Activated B cell treated with CpG ODN at 0.5 μM for 24 hours (primary cell): ENCODE measurements at regions of chr3 and their contacts with region 1.

Region 1: DNA sequence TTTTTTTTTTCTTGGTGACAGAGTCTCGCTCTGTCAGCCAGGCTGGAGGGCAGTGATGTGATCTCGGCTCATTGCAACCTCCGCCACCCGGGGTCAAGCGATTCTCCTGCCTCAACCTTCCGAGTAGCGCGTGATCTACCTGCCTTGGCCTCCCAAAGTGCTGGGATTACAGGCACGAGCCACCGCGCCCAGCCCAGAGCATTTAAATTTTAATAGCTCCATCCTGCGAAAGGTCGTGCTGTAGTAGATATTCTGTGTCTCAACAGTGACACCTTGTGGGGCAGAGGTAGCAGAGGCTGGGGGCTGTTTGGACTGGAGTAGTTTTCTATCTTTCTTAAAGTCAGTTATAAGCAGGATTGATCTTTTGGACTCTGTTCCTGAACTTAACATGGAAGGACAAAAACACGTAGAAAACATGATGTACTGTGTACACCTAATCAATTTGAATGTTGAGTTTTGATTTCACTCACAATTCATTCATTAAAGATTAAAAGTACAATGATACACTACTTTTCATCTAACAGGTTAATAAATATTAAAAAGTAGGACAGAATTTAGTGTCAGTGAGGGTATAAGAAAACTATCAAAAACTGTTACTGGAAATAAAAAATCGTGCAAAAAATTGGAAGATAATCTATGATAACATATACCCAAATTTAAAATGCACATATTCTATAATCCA is 11.0 kb upstream of the PDCD6IP start:
- DNase-seq: peak; percentile 17
- ATAC-seq: peak; percentile 95
- H3K4me3 Mint-ChIP-seq: peak overlapping the region; percentile 26
- H3K27ac Mint-ChIP-seq: no peak overlapping the region
- H3K4me1 Mint-ChIP-seq: peaks cover 13% of the 10 kb centered on the region
- H3K27me3 Mint-ChIP-seq: no peaks in the 10 kb centered on the region
- CTCF ChIP-seq: no peak

Region 2: DNA sequence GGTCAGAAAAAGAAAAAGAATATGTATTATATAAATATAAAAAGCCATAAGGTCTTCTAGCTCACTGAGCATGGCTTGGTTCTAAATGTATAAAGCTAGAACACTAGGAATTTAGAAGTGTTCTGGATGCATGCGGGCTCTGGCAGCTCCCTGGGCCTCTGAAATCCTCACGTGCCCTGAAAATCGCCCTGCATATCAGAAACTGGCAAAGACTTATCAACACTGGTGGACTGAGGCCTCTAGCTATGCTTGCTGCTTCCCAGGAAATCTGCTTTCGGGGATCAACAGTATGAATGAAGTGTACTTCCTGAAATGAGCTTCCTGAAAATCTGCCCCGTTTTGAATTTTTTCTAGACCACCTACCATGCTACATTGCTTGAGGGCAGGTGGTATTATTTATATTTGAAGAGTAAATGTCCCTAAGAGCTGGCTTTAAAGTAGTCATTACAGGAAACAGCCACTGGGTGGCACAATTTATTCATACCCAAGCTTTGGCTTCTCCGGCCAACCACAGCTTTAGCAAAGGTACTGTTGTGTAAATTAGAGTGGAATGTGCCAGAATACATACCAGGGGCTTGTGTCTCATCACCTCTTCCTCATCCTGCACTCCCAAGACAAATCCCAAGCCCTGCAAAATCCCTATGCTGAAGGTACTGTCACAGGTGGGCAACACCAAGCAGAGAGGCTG is 656.0 kb before region 1 on chr3:
- CTCF ChIA-PET with region 1: interaction called, 47 read pairs
- POLR2A ChIA-PET with region 1: interaction called, 3 read pairs
- intact Hi-C with region 1: loop called (anchors 1 kb)
- DNase-seq: no peak
- ATAC-seq: peak; percentile 82
- H3K4me3 Mint-ChIP-seq: no peak overlapping the region
- H3K27ac Mint-ChIP-seq: no peak overlapping the region
- H3K4me1 Mint-ChIP-seq: peaks cover 3% of the 10 kb centered on the region
- H3K27me3 Mint-ChIP-seq: no peaks in the 10 kb centered on the region
- CTCF ChIP-seq: peak; percentile 34

Region 3: DNA sequence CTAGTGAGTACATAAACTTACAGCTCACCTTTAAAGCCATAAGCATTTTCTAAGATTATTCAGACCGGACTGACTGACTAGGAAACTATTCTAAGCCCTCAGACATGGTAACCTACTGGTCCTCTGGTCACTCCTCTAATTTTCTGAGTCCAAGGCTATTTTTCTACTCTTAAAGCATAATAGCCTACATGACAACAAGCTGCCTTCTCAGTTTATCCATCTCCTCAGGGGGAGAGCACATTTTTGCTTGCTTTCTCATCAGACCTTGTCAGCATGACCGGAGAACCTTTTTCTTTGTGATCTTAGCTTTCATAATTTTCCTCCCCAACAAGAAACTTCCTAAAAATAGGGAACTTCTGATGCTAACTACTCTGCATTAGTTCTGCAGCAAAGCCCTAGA is 385.7 kb before region 1 on chr3:
- CTCF ChIA-PET with region 1: no interaction called
- POLR2A ChIA-PET with region 1: no interaction called
- intact Hi-C with region 1: loop called (anchors 10 kb)
- DNase-seq: no peak
- ATAC-seq: no peak
- H3K4me3 Mint-ChIP-seq: no peak overlapping the region
- H3K27ac Mint-ChIP-seq: no peak overlapping the region
- H3K4me1 Mint-ChIP-seq: no peaks in the 10 kb centered on the region
- H3K27me3 Mint-ChIP-seq: no peaks in the 10 kb centered on the region
- CTCF ChIP-seq: no peak

Region 4: DNA sequence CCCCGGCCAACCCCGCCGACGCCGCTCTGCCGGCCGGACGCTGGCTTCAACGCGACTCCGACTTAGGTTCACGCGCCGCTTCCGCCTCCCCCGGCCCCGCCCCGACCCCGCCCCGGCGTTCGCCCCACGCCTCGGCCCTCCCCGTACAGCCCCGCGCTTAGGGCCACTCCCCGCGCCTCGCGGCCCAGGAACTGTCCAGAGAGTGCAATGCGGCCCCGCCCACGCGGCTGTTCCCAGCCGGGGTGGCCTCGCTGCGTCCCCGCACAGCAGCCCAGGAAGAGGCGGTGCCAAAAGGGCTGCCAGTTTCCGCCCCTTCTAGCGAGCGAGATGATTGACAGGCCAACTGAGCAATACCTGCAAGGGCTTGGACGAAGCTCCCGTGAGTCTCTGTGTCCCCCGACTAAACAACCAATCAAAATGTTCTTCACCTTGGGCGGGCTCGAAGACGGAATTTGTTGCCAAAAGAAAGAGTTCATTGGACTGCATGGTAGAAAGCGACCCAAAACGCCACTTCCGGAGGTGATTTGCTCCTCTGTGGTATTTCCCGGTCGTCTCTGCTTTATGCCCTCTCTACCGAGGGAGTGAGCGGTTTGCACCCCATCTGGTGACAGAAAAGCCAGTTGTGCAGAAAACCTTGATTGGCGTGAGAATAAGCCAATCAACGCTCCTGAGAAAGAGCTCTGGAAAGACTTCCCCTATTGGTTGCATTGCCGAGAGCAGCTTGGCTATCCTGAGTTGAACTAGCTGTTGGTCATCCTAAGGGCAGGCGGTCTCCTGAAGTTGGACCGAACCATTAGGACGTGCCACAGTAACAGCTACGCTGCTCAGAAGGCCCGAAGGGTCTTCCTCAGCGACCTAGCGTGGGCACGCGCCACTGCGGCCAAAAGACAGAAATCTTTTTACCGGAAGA is 346.9 kb before region 1 on chr3 and contains the start of gene UBP1:
- CTCF ChIA-PET with region 1: no interaction called
- POLR2A ChIA-PET with region 1: no interaction called
- intact Hi-C with region 1: no loop called
- DNase-seq: peak; percentile 95
- ATAC-seq: peak; percentile 84
- H3K4me3 Mint-ChIP-seq: peak within 1 kb of the TSS; percentile 100
- H3K27ac Mint-ChIP-seq: peak within 1 kb of the TSS; percentile 100
- H3K4me1 Mint-ChIP-seq: peaks cover 48% of the 10 kb centered on the region
- H3K27me3 Mint-ChIP-seq: no peaks in the 10 kb centered on the region
- CTCF ChIP-seq: no peak
- total RNA-seq, gene UBP1: 50.1 and 68.6 TPM in 2 replicates

Region 5: GRCh38 chr3:33717866-33718594 is 69.4 kb before region 1 on chr3 and contains the start of gene CLASP2:
- CTCF ChIA-PET with region 1: interaction called, 3 read pairs
- POLR2A ChIA-PET with region 1: interaction called, 3 read pairs
- intact Hi-C with region 1: loop called (anchors 2 kb)
- DNase-seq: peak; percentile 89
- ATAC-seq: peak; percentile 90
- H3K4me3 Mint-ChIP-seq: peak within 1 kb of the TSS; percentile 96
- H3K27ac Mint-ChIP-seq: peak within 1 kb of the TSS; percentile 98
- H3K4me1 Mint-ChIP-seq: peaks cover 12% of the 10 kb centered on the region
- H3K27me3 Mint-ChIP-seq: no peaks in the 10 kb centered on the region
- CTCF ChIP-seq: no peak
- total RNA-seq, gene CLASP2: 73.3 and 85.8 TPM in 2 replicates

Region 6: GRCh38 chr3:33798411-33799201 is 11.1 kb after region 1 on chr3 and contains the start of gene PDCD6IP:
- CTCF ChIA-PET with region 1: interaction called, 23 read pairs
- POLR2A ChIA-PET with region 1: interaction called, 5 read pairs
- intact Hi-C with region 1: no loop called
- DNase-seq: peak; percentile 93
- ATAC-seq: peak; percentile 84
- H3K4me3 Mint-ChIP-seq: peak within 1 kb of the TSS; percentile 99
- H3K27ac Mint-ChIP-seq: peak within 1 kb of the TSS; percentile 95
- H3K4me1 Mint-ChIP-seq: peaks cover 52% of the 10 kb centered on the region
- H3K27me3 Mint-ChIP-seq: no peaks in the 10 kb centered on the region
- CTCF ChIP-seq: no peak
- total RNA-seq, gene PDCD6IP: 216 and 237 TPM in 2 replicates